ENCODE measurements at regions of chr2 and their contacts with region 1.

Region 1: GRCh38 chr2:230987137-230988020 is 8.5 kb upstream of the SPATA3 start:
- DNase-seq: peak; percentile 53 to 92 (median 81)
- ATAC-seq: peak; percentile 74
- H3K4me3 ChIP-seq: peak overlapping the region; percentile 49 to 71
- H3K4me3 Mint-ChIP-seq: peak overlapping the region; percentile 59
- H3K27ac ChIP-seq: no peak overlapping the region
- H3K27ac Mint-ChIP-seq: no peak overlapping the region
- H3K4me1 ChIP-seq: peaks cover 10% of the 10 kb centered on the region
- H3K4me1 Mint-ChIP-seq: peaks cover 13% of the 10 kb centered on the region
- H3K27me3 ChIP-seq: no peaks in the 10 kb centered on the region
- H3K27me3 Mint-ChIP-seq: peaks cover 10% of the 10 kb centered on the region
- CTCF ChIP-seq: peak; percentile 90

Region 2: DNA sequence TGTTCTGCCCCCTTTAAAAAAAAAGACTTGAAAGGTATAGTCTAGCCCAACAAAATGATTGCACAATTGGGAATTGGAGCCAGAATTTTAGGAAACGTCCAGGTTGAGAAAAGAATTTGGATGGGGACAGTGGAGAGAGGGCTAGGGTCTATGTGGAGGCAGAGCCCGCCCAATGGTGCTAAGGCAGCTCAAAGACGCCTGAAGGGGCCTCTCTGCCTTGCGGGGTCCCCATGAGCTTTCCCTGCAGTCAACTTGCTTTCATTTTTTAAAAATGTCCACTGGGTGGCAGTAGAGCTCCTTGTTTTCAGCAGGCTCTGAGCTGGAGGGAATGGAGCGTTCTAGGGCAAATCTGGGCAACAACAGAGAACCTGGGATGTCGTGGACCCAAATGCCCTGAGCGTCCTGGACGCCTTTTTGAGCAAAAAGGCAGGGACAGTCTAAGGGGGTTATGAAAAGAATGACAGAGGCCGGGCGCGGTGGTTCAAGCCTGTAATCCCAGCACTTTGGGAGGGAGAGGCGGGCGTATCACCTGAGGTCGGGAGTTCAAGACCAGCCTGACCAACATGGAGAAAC is 162.9 kb before region 1 on chr2:
- CTCF ChIA-PET with region 1: interaction called, 100 read pairs
- POLR2A ChIA-PET with region 1: interaction called, 10 read pairs
- intact Hi-C with region 1: loop called (anchors 1 kb)
- DNase-seq: peak; percentile 17 to 88 (median 55)
- ATAC-seq: peak; percentile 90
- H3K4me3 ChIP-seq: no peak overlapping the region
- H3K4me3 Mint-ChIP-seq: peak overlapping the region; percentile 64
- H3K27ac ChIP-seq: no peak overlapping the region
- H3K27ac Mint-ChIP-seq: no peak overlapping the region
- H3K4me1 ChIP-seq: peaks cover 5% of the 10 kb centered on the region
- H3K4me1 Mint-ChIP-seq: peaks cover 7% of the 10 kb centered on the region
- H3K27me3 ChIP-seq: peaks cover 11 to 12% of the 10 kb centered on the region in 2 experiments
- H3K27me3 Mint-ChIP-seq: peaks cover 29% of the 10 kb centered on the region
- CTCF ChIP-seq: peak; percentile 83

Region 3: GRCh38 chr2:230847883-230848388 is 139.4 kb before region 1 on chr2:
- CTCF ChIA-PET with region 1: interaction called, 114 read pairs
- POLR2A ChIA-PET with region 1: no interaction called
- intact Hi-C with region 1: loop called (anchors 1 kb)
- DNase-seq: peak; percentile 73 to 94 (median 87)
- ATAC-seq: peak; percentile 91
- H3K4me3 ChIP-seq: no peak overlapping the region
- H3K4me3 Mint-ChIP-seq: no peak overlapping the region
- H3K27ac ChIP-seq: no peak overlapping the region
- H3K27ac Mint-ChIP-seq: no peak overlapping the region
- H3K4me1 ChIP-seq: peaks cover 8% of the 10 kb centered on the region
- H3K4me1 Mint-ChIP-seq: peaks cover 6% of the 10 kb centered on the region
- H3K27me3 ChIP-seq: peaks cover 0 to 9% of the 10 kb centered on the region in 2 experiments
- H3K27me3 Mint-ChIP-seq: peaks cover 14% of the 10 kb centered on the region
- CTCF ChIP-seq: peak; percentile 82

Region 4: DNA sequence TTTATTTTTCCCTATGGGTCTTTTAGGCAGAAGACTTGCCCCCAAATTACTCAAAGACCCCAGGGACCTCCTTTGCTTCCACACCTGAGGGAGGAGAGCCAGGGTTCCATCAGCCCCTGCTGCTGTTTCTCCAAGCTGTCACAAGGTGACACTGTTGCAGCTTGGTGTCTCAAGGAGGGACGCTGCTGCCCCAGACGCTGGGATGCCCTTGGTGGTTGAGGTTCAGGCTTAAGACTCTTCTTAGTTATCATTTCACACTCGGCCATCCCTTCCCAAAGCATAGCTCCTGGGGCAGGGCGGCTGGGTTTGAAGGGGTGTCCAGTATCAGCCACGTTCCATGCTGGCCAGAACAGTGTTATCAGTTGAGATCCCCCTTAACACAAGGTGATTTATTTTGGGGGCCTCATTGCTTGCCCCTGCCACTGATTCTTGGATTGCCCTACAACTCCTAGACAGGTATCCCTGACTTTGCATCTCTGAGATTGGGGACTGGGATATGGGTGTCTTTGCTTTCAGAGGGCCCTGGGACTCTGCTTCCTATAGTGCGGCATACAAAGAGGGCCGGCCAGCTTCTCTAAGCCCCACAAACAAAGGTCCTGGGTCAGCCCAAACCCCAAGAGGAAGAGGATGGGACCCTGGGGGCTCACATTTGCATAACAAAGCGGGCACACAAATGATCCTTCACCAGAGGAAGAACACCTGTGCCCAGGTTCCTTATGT is 85.0 kb before region 1 on chr2:
- CTCF ChIA-PET with region 1: interaction called, 368 read pairs
- POLR2A ChIA-PET with region 1: interaction called, 3 read pairs
- intact Hi-C with region 1: loop called (anchors 1 kb)
- DNase-seq: peak in 7 of 9 experiments; percentile 40 to 78 (median 60)
- ATAC-seq: no peak
- H3K4me3 ChIP-seq: no peak overlapping the region
- H3K4me3 Mint-ChIP-seq: no peak overlapping the region
- H3K27ac ChIP-seq: no peak overlapping the region
- H3K27ac Mint-ChIP-seq: no peak overlapping the region
- H3K4me1 ChIP-seq: peaks cover 24% of the 10 kb centered on the region
- H3K4me1 Mint-ChIP-seq: peaks cover 34% of the 10 kb centered on the region
- H3K27me3 ChIP-seq: no peaks in the 10 kb centered on the region
- H3K27me3 Mint-ChIP-seq: no peaks in the 10 kb centered on the region
- CTCF ChIP-seq: peak; percentile 84

Region 5: DNA sequence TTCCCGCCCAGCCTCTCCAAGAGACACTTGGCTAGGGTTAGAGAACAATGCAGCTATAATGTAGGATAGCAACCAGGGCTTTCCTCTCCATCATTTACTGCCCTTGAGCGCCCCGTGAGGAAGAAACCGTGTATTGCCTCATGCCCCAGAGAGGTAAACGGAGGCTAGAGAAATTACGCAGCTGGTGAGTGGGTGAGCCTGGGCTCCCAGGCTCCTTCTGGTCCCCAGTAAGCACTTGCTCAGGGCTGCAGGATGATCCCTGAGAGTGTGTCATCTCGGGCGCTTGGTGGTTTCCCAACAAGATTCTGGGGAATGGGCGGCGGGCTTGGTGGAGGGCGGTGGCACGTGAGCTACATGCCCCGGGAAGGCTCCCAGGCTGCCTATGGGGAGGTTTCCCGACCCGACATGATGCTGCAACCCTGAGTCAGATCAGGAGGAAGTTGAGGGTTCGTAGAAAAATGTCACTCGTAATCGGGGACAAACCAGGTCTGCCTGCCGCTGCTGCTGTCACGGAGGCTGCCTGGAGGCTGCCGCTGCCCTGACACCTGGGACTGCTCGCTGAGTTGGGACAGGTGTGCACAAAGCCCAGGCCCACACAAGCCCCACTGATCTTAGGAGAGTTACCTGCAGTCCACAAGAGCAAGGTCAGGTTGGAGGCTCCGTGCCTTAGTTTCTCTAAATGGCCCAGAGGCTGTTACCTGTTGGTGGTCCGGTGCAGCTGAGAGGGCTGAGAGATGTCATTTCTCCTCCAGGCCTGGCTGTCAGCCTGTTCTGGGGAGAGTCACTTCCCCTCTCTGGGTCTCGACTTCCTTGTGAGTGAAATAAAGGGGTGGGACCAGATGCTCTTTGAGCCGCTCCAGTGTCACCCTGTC is 62.7 kb before region 1 on chr2 and contains the start of gene GPR55:
- CTCF ChIA-PET with region 1: interaction called, 27 read pairs
- POLR2A ChIA-PET with region 1: interaction called, 6 read pairs
- intact Hi-C with region 1: loop called in 1 of 2 experiments (anchors 1 kb)
- DNase-seq: peak in 8 of 9 experiments; percentile 24 to 71 (median 54)
- ATAC-seq: peak; percentile 77
- H3K4me3 ChIP-seq: peak within 1 kb of the TSS; percentile 51 to 72
- H3K4me3 Mint-ChIP-seq: peak within 1 kb of the TSS; percentile 87
- H3K27ac ChIP-seq: peak within 1 kb of the TSS; percentile 59 to 61
- H3K27ac Mint-ChIP-seq: peak within 1 kb of the TSS; percentile 95
- H3K4me1 ChIP-seq: peaks cover 40% of the 10 kb centered on the region
- H3K4me1 Mint-ChIP-seq: peaks cover 59% of the 10 kb centered on the region
- H3K27me3 ChIP-seq: no peaks in the 10 kb centered on the region
- H3K27me3 Mint-ChIP-seq: no peaks in the 10 kb centered on the region
- CTCF ChIP-seq: peak; percentile 43
- total RNA-seq, gene GPR55: 3.2 to 3.4 TPM

Region 6: GRCh38 chr2:230947908-230948365 is 39.4 kb before region 1 on chr2:
- CTCF ChIA-PET with region 1: interaction called, 23 read pairs
- POLR2A ChIA-PET with region 1: no interaction called
- intact Hi-C with region 1: no loop called
- DNase-seq: no peak
- ATAC-seq: no peak
- H3K4me3 ChIP-seq: no peak overlapping the region
- H3K4me3 Mint-ChIP-seq: no peak overlapping the region
- H3K27ac ChIP-seq: no peak overlapping the region
- H3K27ac Mint-ChIP-seq: no peak overlapping the region
- H3K4me1 ChIP-seq: peaks cover 11% of the 10 kb centered on the region
- H3K4me1 Mint-ChIP-seq: peaks cover 25% of the 10 kb centered on the region
- H3K27me3 ChIP-seq: no peaks in the 10 kb centered on the region
- H3K27me3 Mint-ChIP-seq: no peaks in the 10 kb centered on the region
- CTCF ChIP-seq: no peak

Region 7: DNA sequence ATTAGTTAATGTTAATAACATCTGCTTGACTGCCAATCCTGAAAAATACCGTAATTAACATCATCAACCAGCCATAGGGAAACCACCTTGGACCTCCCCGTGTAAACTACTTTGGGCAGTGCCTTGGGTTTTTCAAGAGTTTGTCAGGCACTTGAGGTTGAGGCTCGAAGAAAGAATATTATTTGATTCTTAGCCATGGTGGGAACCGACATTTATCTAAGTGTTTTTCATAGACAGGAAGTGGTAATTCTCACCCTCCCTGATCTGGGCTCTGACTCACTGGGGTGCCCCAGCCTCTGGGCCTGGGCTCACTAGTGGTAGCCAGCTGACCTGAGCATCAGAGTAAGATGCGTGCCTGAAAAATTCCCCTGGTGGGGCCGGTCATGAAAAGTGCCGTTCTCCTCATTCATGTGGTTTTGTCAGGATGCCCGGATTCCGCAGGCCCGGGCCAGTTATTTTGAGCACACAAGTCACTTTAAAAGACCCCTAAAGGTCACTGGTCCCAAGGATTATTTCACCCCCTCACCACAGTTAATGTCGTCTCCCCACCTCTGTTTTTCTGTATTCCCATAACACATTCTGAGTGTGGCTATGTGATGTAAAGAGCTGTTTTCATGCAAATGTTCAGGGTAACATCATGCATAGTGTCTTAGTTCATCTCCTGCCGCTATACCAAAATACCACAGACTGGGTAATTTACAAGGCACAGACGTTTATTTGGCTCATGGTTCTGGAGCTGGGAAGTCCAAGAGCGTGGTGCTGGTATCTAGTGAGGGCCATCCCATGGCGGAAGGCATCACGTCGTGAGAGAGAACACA is 13.1 kb before region 1 on chr2:
- CTCF ChIA-PET with region 1: interaction called, 44 read pairs
- POLR2A ChIA-PET with region 1: interaction called, 3 read pairs
- intact Hi-C with region 1: no loop called
- DNase-seq: peak; percentile 46 to 96 (median 75)
- ATAC-seq: peak; percentile 85
- H3K4me3 ChIP-seq: peak overlapping the region in 1 of 2 experiments; percentile 9
- H3K4me3 Mint-ChIP-seq: peak overlapping the region; percentile 66
- H3K27ac ChIP-seq: peak overlapping the region; percentile 3 to 67
- H3K27ac Mint-ChIP-seq: peak overlapping the region; percentile 91
- H3K4me1 ChIP-seq: peaks cover 24% of the 10 kb centered on the region
- H3K4me1 Mint-ChIP-seq: peaks cover 52% of the 10 kb centered on the region
- H3K27me3 ChIP-seq: peaks cover 0 to 3% of the 10 kb centered on the region in 2 experiments
- H3K27me3 Mint-ChIP-seq: no peaks in the 10 kb centered on the region
- CTCF ChIP-seq: no peak

Region 8: GRCh38 chr2:232013701-232014353 is 1026.4 kb after region 1 on chr2:
- CTCF ChIA-PET with region 1: no interaction called
- POLR2A ChIA-PET with region 1: no interaction called
- intact Hi-C with region 1: no loop called
- DNase-seq: no peak
- ATAC-seq: no peak
- H3K4me3 ChIP-seq: no peak overlapping the region
- H3K4me3 Mint-ChIP-seq: no peak overlapping the region
- H3K27ac ChIP-seq: no peak overlapping the region
- H3K27ac Mint-ChIP-seq: no peak overlapping the region
- H3K4me1 ChIP-seq: peaks cover 7% of the 10 kb centered on the region
- H3K4me1 Mint-ChIP-seq: peaks cover 25% of the 10 kb centered on the region
- H3K27me3 ChIP-seq: no peaks in the 10 kb centered on the region
- H3K27me3 Mint-ChIP-seq: no peaks in the 10 kb centered on the region
- CTCF ChIP-seq: no peak

Measured in CD8-positive, alpha-beta T cell (primary cell).